Activated CD8-positive, alpha-beta T cell treated with anti-CD3 and anti-CD28 coated beads for 36 hours (primary cell): ENCODE measurements at regions of chr6 and their contacts with region 1.

Region 1: GRCh38 chr6:135506270-135506997 is 8.9 kb upstream of the AHI1 start:
- DNase-seq: peak; percentile 54
- ATAC-seq: peak; percentile 89
- H3K4me3 Mint-ChIP-seq: peak overlapping the region; percentile 35
- H3K27ac Mint-ChIP-seq: peak overlapping the region; percentile 69
- H3K4me1 Mint-ChIP-seq: peaks cover 9% of the 10 kb centered on the region
- H3K27me3 Mint-ChIP-seq: no peaks in the 10 kb centered on the region
- CTCF ChIP-seq: peak; percentile 77

Region 2: DNA sequence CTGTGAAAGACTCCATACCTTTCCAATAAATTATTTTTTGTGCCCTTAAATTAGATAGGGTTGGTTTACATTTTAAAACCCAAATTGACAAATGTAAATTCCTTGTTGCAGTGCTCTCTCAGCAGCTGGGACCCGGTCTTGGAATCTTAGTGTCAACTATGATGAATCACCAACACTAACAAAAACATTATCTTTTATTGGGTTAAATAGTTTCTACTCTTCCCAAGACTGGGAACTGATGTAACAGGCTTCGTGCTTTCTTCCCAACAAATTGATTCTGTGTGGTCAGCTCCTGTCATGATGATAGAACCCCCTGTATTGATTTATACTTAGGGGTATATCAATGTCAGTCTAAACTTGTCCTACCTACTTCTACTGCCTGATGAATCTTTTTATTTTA is 14.3 kb after region 1 on chr6:
- CTCF ChIA-PET with region 1: interaction called, 17 read pairs
- POLR2A ChIA-PET with region 1: no interaction called
- intact Hi-C with region 1: no loop called
- DNase-seq: no peak
- ATAC-seq: no peak
- H3K4me3 Mint-ChIP-seq: no peak overlapping the region
- H3K27ac Mint-ChIP-seq: no peak overlapping the region
- H3K4me1 Mint-ChIP-seq: peaks cover 7% of the 10 kb centered on the region
- H3K27me3 Mint-ChIP-seq: no peaks in the 10 kb centered on the region
- CTCF ChIP-seq: no peak